Dorsolateral prefrontal cortex (tissue), 120 donors: ENCODE measurements at regions of chr12 and their contacts with region 1.

Region 1: DNA sequence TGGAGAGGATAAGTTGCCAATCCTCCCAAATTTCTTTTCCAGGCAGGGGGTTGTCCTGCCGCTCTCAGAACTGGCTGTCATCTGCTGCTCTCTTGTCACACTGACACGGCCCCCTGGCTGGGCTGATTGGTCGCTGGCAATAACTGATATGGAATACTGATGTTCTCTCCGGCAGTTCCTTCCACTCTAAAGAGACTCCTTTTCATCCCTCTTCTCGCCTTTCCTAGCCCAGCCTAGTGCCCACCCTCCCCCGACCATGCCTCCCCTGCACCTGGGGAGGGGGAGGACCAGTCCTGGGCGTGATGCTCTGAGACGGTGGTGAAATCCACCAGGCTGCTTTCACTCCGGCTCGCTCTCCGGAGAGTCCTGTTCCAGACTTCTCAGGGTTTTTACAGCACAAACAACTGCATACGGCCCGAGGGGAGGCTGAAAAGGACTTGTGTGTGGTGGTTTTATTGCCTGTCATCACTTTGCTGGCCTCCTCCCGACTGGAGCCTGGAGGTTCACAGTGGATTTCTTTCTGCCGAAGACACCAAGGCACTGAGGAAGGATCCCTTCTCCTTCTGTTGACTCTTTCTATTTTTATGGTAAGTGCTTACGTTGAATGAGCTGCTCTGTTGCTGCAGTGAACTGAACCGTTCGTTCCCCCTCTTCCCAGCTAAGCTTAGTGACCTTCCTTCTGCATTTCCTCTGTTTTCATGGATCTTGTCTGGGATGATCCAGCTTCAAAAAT is at the start of gene ANO4:
- DNase-seq: peak; percentile 3 to 68 (median 64)
- H3K4me3 ChIP-seq: peak within 1 kb of the TSS; percentile 44 to 87 (median 69)
- H3K27ac ChIP-seq: peak within 1 kb of the TSS; percentile 1 to 97 (median 91)
- H3K27me3 ChIP-seq: no peaks in the 10 kb centered on the region
- CTCF ChIP-seq: peak in 2 of 56 donors; percentile 6 to 17
- total RNA-seq, gene ANO4: 23.4 to 77.0 (median 37.6) TPM

Region 2: DNA sequence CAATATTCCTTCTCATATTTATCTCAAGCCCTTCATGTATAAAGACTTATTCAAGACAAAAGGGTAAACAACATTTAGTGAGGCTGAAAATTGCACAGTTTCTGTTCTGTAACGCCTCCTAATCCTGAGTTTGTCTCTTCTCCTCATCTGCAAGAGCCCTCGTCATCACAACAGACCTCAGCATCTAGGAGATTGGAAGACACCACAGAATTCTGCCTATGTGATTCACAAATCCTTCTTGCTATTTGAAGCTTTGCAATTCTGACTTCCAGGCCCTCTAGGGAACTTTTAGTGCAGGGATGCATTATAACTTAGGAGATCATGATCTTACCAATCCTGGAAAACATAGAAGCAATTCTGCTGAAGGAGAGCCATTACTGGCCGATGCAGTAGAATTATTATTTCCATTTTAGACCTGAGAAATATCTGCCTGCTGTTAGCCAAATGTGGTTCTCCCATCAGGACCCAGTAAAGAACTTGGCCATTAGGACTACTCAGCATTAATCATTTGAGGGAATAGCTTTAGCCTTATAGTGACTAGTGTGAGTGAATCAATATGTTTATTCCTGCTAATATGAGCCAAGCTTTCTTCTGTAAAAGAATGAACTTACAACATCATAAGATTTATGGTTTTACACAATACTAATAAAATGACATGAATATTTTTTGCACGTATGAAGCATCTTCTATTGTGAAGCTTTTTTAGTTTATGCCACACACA is 119.4 kb after region 1 on chr12:
- intact Hi-C with region 1: loop called in 1 of 2 experiments (anchors 10 kb)
- DNase-seq: no peak
- H3K4me3 ChIP-seq: peak overlapping the region in 6 of 59 donors; percentile 1 to 38 (median 10)
- H3K27ac ChIP-seq: peak overlapping the region in 47 of 59 donors; percentile 2 to 74 (median 55)
- H3K27me3 ChIP-seq: no peaks in the 10 kb centered on the region
- CTCF ChIP-seq: no peak